Activated T-helper 1 cell treated with anti-CD3 and anti-CD28 coated beads, Interleukin-12 subunit alpha, Interleukin-12 subunit beta, Interleukin-2, Interleukin-4 antibody, amounts not matched to agents 30 ng/mL and 10 ng/mL and 1 ng/mL, durations not matched to agents 14 hours and 24 hours and 36 hours (primary cell): ENCODE measurements at regions of chr13 and their contacts with region 1.

Region 1: GRCh38 chr13:45180713-45181601 is 19.9 kb downstream of the KCTD4 start:
- DNase-seq: no peak
- H3K4me3 Mint-ChIP-seq: no peak overlapping the region
- H3K27ac Mint-ChIP-seq: no peak overlapping the region
- H3K4me1 Mint-ChIP-seq: peaks cover 44% of the 10 kb centered on the region
- H3K27me3 Mint-ChIP-seq: no peaks in the 10 kb centered on the region

Region 2: DNA sequence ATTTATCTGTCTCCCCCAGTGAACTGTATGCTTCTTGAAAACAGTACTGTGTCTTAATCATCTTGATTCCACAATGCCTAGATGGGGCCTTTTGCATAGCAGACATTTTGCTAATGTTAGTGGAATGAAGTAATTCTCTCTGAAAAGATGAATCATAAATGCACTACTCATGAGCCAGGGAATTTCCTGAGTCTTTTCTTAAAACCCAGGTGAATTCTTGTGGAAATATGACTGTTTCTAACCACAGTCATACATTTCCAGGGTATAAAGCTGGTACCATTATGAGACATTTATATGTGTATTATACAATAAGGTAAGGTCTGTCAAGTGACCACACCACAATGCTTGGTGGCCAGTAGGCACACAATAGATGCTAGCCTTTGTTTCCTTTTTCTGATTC is 25.4 kb after region 1 on chr13:
- intact Hi-C with region 1: loop called (anchors 1 kb)
- DNase-seq: no peak
- H3K4me3 Mint-ChIP-seq: no peak overlapping the region
- H3K27ac Mint-ChIP-seq: peak overlapping the region; percentile 23
- H3K4me1 Mint-ChIP-seq: peaks cover 15% of the 10 kb centered on the region
- H3K27me3 Mint-ChIP-seq: no peaks in the 10 kb centered on the region

Region 3: DNA sequence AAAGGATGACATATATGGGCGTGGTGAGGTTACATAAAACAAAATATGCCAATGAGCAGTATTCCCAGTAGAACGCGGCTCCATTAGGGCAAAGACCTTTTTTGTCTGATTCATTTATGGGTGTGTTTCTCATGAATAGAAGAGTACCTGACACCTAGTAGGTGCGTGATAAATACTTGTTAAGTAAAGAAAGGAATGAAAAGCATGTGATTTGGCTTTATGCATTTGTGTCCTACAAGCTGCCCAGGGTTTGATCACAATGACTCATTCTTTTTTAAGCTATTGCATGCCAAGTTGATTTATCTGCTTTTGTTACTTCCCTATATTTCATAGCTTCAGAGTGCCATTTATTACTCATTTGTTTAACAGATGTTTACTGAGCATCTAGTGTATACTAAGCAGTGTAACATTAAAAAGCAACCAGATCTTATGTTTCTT is 39.0 kb after region 1 on chr13:
- intact Hi-C with region 1: no loop called
- DNase-seq: no peak
- H3K4me3 Mint-ChIP-seq: no peak overlapping the region
- H3K27ac Mint-ChIP-seq: no peak overlapping the region
- H3K4me1 Mint-ChIP-seq: peaks cover 20% of the 10 kb centered on the region
- H3K27me3 Mint-ChIP-seq: no peaks in the 10 kb centered on the region